ENCODE measurements at regions of chr7 and their contacts with region 1.

Region 1: DNA sequence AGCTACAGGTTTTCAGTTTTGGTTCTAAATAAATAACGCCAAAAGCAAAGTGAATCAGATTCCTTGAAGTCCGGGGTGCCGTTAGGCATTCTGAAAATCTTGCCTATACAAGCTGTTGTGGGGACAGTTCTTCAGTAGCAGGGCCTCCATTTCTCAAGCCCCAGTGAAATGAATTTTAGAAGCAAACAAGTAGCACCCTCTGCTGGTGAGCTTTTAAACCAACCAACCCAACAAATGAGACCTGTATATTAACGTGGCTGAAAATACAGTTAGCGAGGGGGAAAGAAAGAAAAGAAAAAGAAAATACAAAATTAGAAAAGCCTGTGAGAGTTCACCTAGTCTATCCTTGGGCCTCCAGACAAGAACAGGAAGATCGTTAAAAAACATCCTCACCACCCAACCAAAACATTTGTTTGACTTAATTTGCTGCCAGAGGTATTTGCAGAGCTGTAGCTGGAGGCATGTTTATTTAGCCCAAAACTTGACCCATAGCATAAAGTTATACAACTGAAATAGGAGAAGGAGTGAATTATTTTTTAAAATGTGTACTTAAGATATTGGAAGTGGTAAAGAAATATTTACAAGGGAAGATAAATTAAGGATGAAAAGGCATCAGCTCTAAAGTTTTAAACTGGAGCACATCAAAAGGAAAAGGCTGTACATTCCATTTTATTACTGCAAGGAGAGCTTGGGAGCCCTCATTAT is 98.9 kb downstream of the DYNC1I1 start:
- DNase-seq: peak; percentile 68
- H3K4me3 ChIP-seq: no peak overlapping the region
- H3K27ac ChIP-seq: no peak overlapping the region
- H3K4me1 ChIP-seq: no peaks in the 10 kb centered on the region
- H3K27me3 ChIP-seq: no peaks in the 10 kb centered on the region

Region 2: GRCh38 chr7:95527033-95527775 is 344.0 kb before region 1 on chr7:
- in situ Hi-C with region 1: loop called (anchors 25 kb)
- DNase-seq: peak; percentile 73
- H3K4me3 ChIP-seq: no peak overlapping the region
- H3K27ac ChIP-seq: no peak overlapping the region
- H3K4me1 ChIP-seq: no peaks in the 10 kb centered on the region
- H3K27me3 ChIP-seq: peaks cover 10% of the 10 kb centered on the region

Region 3: GRCh38 chr7:95723592-95724180 is 147.5 kb before region 1 on chr7:
- in situ Hi-C with region 1: loop called (anchors 5 kb)
- DNase-seq: peak; percentile 76
- H3K4me3 ChIP-seq: no peak overlapping the region
- H3K27ac ChIP-seq: no peak overlapping the region
- H3K4me1 ChIP-seq: no peaks in the 10 kb centered on the region
- H3K27me3 ChIP-seq: peaks cover 5% of the 10 kb centered on the region; the same call in 1 of the 2 replicates

Measured in GM23248 (cell line).